ENCODE measurements at regions of chr16 and their contacts with region 1.

Region 1: DNA sequence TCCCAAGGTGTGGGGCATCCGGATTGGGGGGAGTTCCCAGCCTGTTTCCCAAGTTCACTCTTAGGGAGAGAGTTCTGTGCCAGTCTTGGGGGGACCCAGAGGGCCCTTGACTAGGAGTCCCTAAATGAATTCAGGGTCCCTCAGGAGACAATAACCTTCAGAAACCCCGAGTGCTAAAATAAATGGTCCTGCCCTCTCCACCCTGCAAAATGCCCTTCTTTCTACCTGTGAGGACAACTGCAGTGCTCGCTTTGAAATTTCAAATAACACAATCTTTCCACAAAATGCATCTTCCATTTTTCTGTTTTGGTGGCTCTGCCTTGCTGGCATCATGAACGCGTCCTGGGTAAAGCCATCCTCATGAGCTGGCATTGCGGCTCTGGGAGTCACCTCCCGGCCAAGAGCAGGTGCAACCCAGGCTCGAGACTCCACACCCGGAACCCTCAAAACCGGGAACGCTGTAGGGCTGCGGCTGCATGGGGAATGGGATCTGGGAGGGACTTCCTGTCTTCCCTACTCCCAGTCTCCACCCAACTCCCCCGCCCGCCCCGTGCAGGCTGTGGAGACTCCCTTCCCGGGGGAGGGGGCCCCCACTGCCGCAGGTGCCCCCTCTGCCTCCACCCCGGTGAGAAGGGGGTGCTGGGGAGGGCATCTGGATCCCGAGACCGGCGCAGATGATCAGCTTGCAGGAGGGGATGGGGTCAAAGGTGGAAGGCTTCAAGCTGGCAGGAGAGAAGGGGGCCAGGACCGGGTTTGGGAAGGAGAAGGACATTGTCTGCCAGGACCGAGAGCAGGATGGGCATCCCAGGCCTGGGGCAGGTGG is at the start of gene ZNF205:
- DNase-seq: peak; percentile 85 to 94
- ATAC-seq: peak; percentile 95 to 98
- H3K4me3 ChIP-seq: peak within 1 kb of the TSS; percentile 84
- H3K27ac ChIP-seq: peak within 1 kb of the TSS; percentile 90 to 96
- H3K4me1 ChIP-seq: peaks cover 18% of the 10 kb centered on the region
- CTCF ChIP-seq: no peak
- EP300 ChIP-seq: no peak
- POLR2A ChIP-seq: peak; percentile 39; the same call in 1 of the 2 replicates
- RAD21 ChIP-seq: no peak
- polyA plus RNA-seq, gene ZNF205: 3.1 and 4.3 TPM in 2 replicates

Region 2: DNA sequence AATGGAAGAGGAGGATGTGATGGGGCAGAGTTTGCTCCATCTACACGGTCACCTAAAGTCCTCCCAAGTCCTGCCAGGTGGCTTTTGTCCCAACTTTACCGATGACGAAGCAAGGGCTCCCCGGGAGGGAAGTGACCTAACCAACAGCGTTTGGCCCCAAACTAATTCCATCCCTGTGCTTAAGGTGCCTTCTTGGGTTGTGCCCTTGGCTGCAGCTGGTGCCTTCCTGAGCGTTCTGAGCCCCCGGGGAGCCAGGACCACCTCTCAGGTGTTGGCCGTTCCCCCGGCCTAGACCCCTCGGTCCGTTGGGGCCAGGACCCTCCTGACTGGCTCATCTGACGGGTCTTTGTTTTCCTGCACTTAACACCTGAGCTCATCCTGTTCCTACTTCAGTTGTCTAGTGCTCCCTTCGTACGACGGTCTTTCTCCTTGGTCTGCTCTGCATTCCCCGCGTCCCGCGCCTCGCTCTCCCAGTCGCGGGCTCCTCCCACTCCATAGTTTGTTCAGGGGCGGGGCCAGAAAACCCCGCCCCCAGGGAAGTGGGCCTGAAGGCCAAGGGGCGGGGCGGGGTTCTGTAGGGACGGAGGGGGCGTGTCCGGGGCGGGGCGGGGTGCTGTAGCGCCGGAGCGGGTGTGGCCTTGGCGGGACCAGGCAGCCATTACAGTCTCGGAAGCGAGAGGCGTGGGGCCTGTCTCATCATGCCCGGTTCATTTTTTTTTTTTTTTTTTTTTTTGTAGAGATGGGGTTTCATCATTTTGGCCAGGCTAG is 12.4 kb before region 1 on chr16:
- CTCF ChIA-PET with region 1: interaction called, 18 read pairs
- POLR2A ChIA-PET with region 1: interaction called, 17 read pairs
- DNase-seq: peak; percentile 80 to 92
- ATAC-seq: peak; percentile 75 to 87
- H3K4me3 ChIP-seq: peak overlapping the region; percentile 34; the same call in 2 of the 3 replicates
- H3K27ac ChIP-seq: peak overlapping the region; percentile 69 to 78
- H3K4me1 ChIP-seq: peaks cover 15% of the 10 kb centered on the region
- CTCF ChIP-seq: no peak
- EP300 ChIP-seq: no peak
- POLR2A ChIP-seq: no peak
- RAD21 ChIP-seq: no peak

Region 3: GRCh38 chr16:3123986-3124886 is 12.0 kb after region 1 on chr16:
- CTCF ChIA-PET with region 1: interaction called, 46 read pairs
- POLR2A ChIA-PET with region 1: interaction called, 5 read pairs
- DNase-seq: peak; percentile 81 to 92
- ATAC-seq: peak; percentile 92 to 94
- H3K4me3 ChIP-seq: peak overlapping the region; percentile 88
- H3K27ac ChIP-seq: peak overlapping the region; percentile 82 to 86
- H3K4me1 ChIP-seq: peaks cover 12% of the 10 kb centered on the region; the same call in 1 of the 3 replicates
- CTCF ChIP-seq: no peak
- EP300 ChIP-seq: no peak
- POLR2A ChIP-seq: peak; percentile 68
- RAD21 ChIP-seq: no peak

Region 4: DNA sequence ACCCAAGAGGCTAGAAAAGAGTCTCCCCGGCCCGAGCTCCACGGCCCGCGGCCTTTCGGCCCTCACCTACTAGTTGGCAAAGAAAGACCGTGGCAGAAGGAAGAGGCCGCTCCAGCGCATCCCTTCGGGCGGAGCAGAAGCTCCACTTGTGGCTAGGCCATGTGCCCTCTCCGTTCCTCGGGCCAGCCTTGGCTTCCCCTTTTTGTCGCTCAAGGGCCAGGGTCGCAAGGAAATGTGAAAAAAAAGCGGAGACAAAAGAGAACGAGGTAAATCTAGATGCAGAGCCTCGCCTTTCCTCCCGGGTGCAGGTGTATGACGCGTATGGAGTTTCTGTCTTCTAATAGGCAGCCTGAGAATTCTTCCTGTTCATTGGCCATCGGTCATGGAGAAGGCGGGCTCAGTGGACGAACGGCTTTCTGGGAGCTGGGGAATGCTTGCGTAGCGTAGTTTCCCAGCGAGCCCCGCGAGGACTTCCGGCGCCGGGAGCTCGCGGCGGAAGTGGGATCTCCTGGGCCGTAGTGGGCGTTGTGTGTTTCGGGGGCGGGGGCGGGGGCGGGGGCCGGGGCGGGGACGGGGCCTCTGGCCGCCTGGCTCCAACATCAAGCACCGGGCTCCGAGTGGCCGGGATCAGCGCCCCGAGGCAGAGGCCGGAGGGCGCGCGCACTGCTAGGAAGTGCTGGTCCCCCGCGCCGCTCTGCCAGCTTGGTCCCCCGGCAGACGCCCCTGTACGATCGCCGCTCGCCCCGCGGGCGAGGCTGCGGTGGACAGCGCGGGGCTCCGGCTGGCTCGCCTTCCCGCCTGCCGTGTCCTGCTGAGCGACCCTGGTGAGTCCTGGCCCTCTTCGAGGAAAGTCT is 22.5 kb after region 1 on chr16 and contains the start of gene ZNF213:
- CTCF ChIA-PET with region 1: interaction called, 46 read pairs
- POLR2A ChIA-PET with region 1: interaction called, 10 read pairs
- DNase-seq: peak; percentile 94 to 98
- ATAC-seq: peak; percentile 95 to 96
- H3K4me3 ChIP-seq: peak within 1 kb of the TSS; percentile 98
- H3K27ac ChIP-seq: peak within 1 kb of the TSS; percentile 90 to 98
- H3K4me1 ChIP-seq: peaks cover 14% of the 10 kb centered on the region; the same call in 1 of the 3 replicates
- CTCF ChIP-seq: no peak
- EP300 ChIP-seq: no peak
- POLR2A ChIP-seq: peak; percentile 70
- RAD21 ChIP-seq: no peak
- polyA plus RNA-seq, gene ZNF213: 0.72 and 1.8 TPM in 2 replicates